ENCODE measurements at regions of chr2 and their contacts with region 1.

Region 1: DNA sequence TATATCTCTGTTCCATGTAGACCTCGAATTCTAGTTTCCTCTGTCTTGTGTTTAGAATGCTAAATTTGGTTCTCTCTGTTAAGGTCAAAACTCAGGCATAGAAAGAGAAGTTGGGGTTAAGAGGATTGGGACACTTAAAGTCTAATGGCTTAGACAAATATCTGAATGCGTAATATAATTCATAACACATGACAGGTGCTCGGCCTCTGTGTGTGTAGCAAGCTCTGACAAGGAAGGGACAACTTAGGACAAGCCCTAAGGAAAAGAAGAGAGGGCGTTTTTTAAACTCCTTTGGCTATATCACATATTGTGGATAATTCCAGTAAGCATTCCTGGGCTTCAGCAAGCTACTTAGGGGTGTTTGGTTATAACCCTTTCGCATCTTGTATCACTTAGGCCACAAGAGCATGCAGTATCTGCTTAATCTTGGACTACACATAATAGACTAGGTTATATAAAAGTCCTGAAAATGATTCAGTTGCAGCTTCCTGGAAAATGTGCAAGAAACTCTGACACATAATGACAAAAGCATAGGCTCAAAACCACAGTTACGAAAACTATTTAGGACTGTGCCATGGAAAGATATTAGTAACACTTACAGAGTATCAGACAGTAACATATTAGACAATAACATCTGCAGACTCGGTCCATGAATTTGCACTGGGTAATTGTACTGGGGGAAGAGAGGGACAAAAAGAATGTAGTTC is 16.1 kb upstream of the CREB1 start:
- DNase-seq: peak; percentile 93
- ATAC-seq: peak; percentile 93
- H3K4me3 ChIP-seq: peak overlapping the region; percentile 29; the same call in 1 of the 2 replicates
- H3K27ac ChIP-seq: peak overlapping the region; percentile 85
- H3K4me1 ChIP-seq: peaks cover 36% of the 10 kb centered on the region
- H3K27me3 ChIP-seq: no peaks in the 10 kb centered on the region
- CTCF ChIP-seq: no peak

Region 2: DNA sequence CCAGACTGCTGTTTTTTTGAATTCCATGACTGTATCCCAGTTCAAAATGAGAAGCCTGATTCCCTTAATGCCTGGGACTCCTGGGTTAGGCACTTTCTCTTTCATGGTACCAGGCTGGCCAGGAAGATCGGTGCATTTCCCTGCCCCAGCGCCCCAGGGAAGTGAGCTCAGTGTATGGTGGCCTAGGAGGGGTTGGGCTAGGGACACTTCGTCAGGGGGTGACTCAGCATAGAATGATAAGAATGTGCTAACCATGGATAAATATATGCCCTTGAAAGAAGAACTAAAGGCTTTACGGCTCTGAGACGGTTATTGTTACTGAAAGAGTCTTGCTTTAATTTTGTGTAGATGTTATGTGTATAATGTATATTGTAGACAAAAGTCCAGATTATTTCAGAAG is 898.9 kb before region 1 on chr2:
- CTCF ChIA-PET with region 1: no interaction called
- POLR2A ChIA-PET with region 1: no interaction called
- intact Hi-C with region 1: loop called (anchors 5 kb)
- DNase-seq: peak; percentile 88
- ATAC-seq: peak; percentile 57
- H3K4me3 ChIP-seq: peak overlapping the region; percentile 3; the same call in 1 of the 2 replicates
- H3K27ac ChIP-seq: peak overlapping the region; percentile 84
- H3K4me1 ChIP-seq: peaks cover 73% of the 10 kb centered on the region
- H3K27me3 ChIP-seq: no peaks in the 10 kb centered on the region
- CTCF ChIP-seq: no peak